Heart right ventricle (tissue), 16 donors: ENCODE measurements at regions of chr14 and their contacts with region 1.

Region 1: GRCh38 chr14:76876076-76876475 is 49.9 kb downstream of the LRRC74A start:
- DNase-seq: peak; percentile 48 to 51
- ATAC-seq: peak; percentile 71 to 92 (median 88)
- H3K4me3 ChIP-seq: no peak overlapping the region
- H3K27ac ChIP-seq: no peak overlapping the region
- H3K4me1 ChIP-seq: no peaks in the 10 kb centered on the region
- H3K27me3 ChIP-seq: no peaks in the 10 kb centered on the region
- CTCF ChIP-seq: peak; percentile 79 to 97 (median 93)

Region 2: GRCh38 chr14:77067632-77068514 is 191.8 kb after region 1 on chr14:
- intact Hi-C with region 1: loop called (anchors 1 to 5 kb)
- DNase-seq: peak; percentile 63 to 75
- ATAC-seq: peak; percentile 68 to 81 (median 74)
- H3K4me3 ChIP-seq: no peak overlapping the region
- H3K27ac ChIP-seq: peak overlapping the region in 5 of 10 donors; percentile 23 to 51 (median 38)
- H3K4me1 ChIP-seq: peaks cover 6 to 56% (median 40%) of the 10 kb centered on the region in 9 donors
- H3K27me3 ChIP-seq: no peaks in the 10 kb centered on the region
- CTCF ChIP-seq: peak; percentile 71 to 96 (median 86)

Region 3: GRCh38 chr14:77097700-77098528 is 221.8 kb after region 1 on chr14 and contains the start of gene CIPC:
- intact Hi-C with region 1: loop called in 3 of 10 experiments (anchors 1 to 2 kb)
- DNase-seq: peak; percentile 99 to 100
- ATAC-seq: peak; percentile 94 to 98 (median 96)
- H3K4me3 ChIP-seq: peak within 1 kb of the TSS; percentile 53 to 86 (median 73)
- H3K27ac ChIP-seq: peak within 1 kb of the TSS; percentile 94 to 99 (median 98)
- H3K4me1 ChIP-seq: peaks cover 0 to 62% (median 49%) of the 10 kb centered on the region in 9 donors
- H3K27me3 ChIP-seq: no peaks in the 10 kb centered on the region
- CTCF ChIP-seq: no peak
- total RNA-seq, gene CIPC: 51.4 to 93.8 (median 64.2) TPM

Region 4: GRCh38 chr14:77314043-77314442 is 438.0 kb after region 1 on chr14:
- intact Hi-C with region 1: loop called in 9 of 10 experiments (anchors 5 to 10 kb)
- DNase-seq: no peak
- ATAC-seq: no peak
- H3K4me3 ChIP-seq: no peak overlapping the region
- H3K27ac ChIP-seq: no peak overlapping the region
- H3K4me1 ChIP-seq: peaks cover 0 to 54% (median 20%) of the 10 kb centered on the region in 9 donors
- H3K27me3 ChIP-seq: no peaks in the 10 kb centered on the region
- CTCF ChIP-seq: no peak